Activated CD8-positive, alpha-beta T cell treated with anti-CD3 and anti-CD28 coated beads, Interleukin-2, amount 10 ng/mL, durations not matched to agents 7 days and 5 days (primary cell): ENCODE measurements at regions of chr1 and their contacts with region 1.

Region 1: GRCh38 chr1:112501810-112502641 is 6.7 kb upstream of the WNT2B start:
- DNase-seq: peak; percentile 64
- ATAC-seq: peak; percentile 78
- H3K4me3 Mint-ChIP-seq: peak overlapping the region; percentile 54
- H3K27ac Mint-ChIP-seq: no peak overlapping the region
- H3K4me1 Mint-ChIP-seq: peaks cover 8% of the 10 kb centered on the region
- H3K27me3 Mint-ChIP-seq: peaks cover 59% of the 10 kb centered on the region

Region 2: GRCh38 chr1:112522621-112523020 is 20.6 kb after region 1 on chr1:
- CTCF ChIA-PET with region 1: interaction called, 13 read pairs
- POLR2A ChIA-PET with region 1: no interaction called
- DNase-seq: no peak
- ATAC-seq: no peak
- H3K4me3 Mint-ChIP-seq: no peak overlapping the region
- H3K27ac Mint-ChIP-seq: no peak overlapping the region
- H3K4me1 Mint-ChIP-seq: no peaks in the 10 kb centered on the region
- H3K27me3 Mint-ChIP-seq: no peaks in the 10 kb centered on the region

Region 3: GRCh38 chr1:112614460-112615065 is 112.5 kb after region 1 on chr1:
- CTCF ChIA-PET with region 1: interaction called, 55 read pairs
- POLR2A ChIA-PET with region 1: interaction called, 7 read pairs
- DNase-seq: peak; percentile 31
- ATAC-seq: no peak
- H3K4me3 Mint-ChIP-seq: no peak overlapping the region
- H3K27ac Mint-ChIP-seq: no peak overlapping the region
- H3K4me1 Mint-ChIP-seq: peaks cover 23% of the 10 kb centered on the region
- H3K27me3 Mint-ChIP-seq: no peaks in the 10 kb centered on the region

Region 4: GRCh38 chr1:112619520-112620376 is 117.7 kb after region 1 on chr1 and contains the start of gene CAPZA1:
- CTCF ChIA-PET with region 1: interaction called, 55 read pairs
- POLR2A ChIA-PET with region 1: interaction called, 7 read pairs
- DNase-seq: peak; percentile 95
- ATAC-seq: peak; percentile 80
- H3K4me3 Mint-ChIP-seq: peak within 1 kb of the TSS; percentile 100
- H3K27ac Mint-ChIP-seq: peak within 1 kb of the TSS; percentile 100
- H3K4me1 Mint-ChIP-seq: peaks cover 36% of the 10 kb centered on the region
- H3K27me3 Mint-ChIP-seq: no peaks in the 10 kb centered on the region
- total RNA-seq, gene CAPZA1: 279 to 280 TPM

Region 5: DNA sequence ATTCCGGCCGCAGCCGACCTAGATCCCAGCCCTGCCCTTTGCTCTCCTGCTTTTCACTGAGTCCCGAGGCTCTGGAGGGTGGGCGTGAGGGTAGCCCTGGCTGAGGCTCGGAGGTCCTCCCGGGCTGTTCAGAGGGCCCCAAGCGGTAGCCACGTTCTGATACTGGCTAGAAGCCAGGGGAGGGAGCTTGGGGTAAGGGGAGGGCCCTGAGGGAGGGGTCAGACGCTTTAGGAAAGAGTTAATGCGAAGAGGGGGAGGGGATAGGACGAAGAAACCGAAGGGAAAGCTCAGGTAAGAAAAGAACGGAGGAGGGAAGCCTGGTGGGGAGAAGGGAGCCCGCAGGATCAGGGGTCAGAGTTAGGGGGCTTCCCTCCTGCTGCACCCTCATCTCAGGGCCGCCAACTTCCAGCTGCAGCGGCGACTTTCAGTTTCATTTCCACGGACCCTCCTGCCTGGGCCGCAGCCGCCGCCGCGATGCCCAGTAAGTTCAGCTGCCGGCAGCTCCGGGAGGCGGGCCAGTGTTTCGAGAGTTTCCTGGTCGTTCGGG is 172.5 kb after region 1 on chr1 and contains the start of gene MOV10:
- CTCF ChIA-PET with region 1: interaction called, 18 read pairs
- POLR2A ChIA-PET with region 1: interaction called, 3 read pairs
- DNase-seq: peak; percentile 75
- ATAC-seq: peak; percentile 77
- H3K4me3 Mint-ChIP-seq: peak within 1 kb of the TSS; percentile 95
- H3K27ac Mint-ChIP-seq: peak within 1 kb of the TSS; percentile 97
- H3K4me1 Mint-ChIP-seq: peaks cover 47% of the 10 kb centered on the region
- H3K27me3 Mint-ChIP-seq: no peaks in the 10 kb centered on the region
- total RNA-seq, gene MOV10: 120 TPM

Region 6: DNA sequence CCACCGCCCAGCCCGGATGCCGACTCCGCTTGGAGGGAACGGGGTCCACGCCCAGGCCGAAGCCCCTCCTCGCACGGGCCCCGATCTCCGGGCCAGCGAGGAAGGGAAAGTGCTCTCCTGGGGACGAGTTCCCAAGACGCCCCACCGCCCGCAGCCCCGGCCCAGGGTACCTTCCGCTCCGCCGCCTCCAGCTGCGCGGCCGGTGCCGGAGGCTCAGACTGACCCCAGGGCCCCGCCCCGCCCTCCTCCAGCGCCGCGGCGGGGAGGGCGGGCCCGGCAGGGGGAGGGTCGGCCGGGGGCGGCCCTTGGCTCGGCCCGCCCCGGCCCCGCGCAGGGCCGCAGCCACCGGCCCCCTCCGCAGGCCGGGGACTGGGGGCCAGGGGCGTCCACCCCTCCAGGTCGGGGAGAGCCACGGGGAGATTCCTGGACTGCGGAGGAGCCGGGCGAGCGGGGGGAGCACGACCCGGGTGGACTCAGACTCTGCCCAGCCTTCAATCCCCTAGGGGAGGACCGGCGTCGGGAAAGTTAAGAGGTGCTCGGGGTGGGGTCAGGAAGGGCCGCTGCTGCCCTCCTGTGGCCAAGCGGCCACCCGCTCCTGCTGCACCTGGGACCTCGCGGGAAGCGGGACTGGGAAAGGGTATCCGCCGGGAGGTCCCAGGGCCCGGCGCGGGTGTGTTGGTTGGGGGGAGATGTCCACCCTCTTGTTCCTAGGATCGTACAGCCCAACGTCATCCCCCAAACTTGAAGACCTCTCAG is 205.1 kb after region 1 on chr1 and contains the start of gene RHOC:
- CTCF ChIA-PET with region 1: interaction called, 27 read pairs
- POLR2A ChIA-PET with region 1: interaction called, 4 read pairs
- DNase-seq: peak; percentile 72
- ATAC-seq: peak; percentile 75
- H3K4me3 Mint-ChIP-seq: peak within 1 kb of the TSS; percentile 79
- H3K27ac Mint-ChIP-seq: peak within 1 kb of the TSS; percentile 92
- H3K4me1 Mint-ChIP-seq: peaks cover 44% of the 10 kb centered on the region
- H3K27me3 Mint-ChIP-seq: peaks cover 25% of the 10 kb centered on the region
- total RNA-seq, gene RHOC: 85.6 to 93.8 TPM

Region 7: DNA sequence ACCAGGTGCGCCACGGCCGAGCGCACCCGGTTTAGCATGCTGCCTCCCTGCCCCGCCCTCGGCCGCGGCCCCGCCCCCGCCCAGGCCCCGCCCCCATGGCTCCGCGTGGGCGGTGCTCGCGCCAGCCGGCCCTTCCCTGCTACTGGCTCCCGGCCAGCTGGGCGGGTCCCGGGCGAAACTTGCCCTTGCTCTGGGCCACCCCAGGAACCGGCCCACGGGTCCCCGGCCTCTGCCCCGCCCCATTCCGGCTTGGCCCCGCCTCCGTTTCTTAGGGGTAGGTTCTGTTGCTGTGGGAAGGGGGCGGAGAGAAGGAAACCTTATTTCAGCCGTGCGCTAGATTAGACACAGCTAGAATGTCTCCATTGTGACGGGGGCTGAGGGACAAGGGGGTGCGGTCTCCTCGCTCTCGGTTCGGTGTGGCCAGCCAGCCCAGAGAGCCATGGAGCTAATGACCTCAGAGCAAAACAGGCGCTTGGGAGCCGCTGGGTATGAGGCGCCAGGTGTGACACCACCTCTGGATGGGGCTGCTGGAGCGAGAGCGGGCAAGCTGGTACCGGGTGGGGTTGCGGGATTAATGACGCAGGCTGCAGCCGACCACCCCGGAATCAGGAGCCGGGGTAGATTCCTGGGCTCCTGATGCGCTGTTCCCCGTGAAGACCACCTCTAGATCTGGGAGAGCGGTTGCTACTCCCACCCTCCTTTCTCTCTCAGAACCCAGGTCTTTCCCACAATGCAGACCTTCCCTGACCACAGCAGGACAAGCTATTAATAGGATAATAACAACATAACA is 213.4 kb after region 1 on chr1 and contains the start of gene PPM1J:
- CTCF ChIA-PET with region 1: interaction called, 18 read pairs
- POLR2A ChIA-PET with region 1: no interaction called
- DNase-seq: peak; percentile 98
- ATAC-seq: peak; percentile 93
- H3K4me3 Mint-ChIP-seq: peak within 1 kb of the TSS; percentile 81
- H3K27ac Mint-ChIP-seq: peak within 1 kb of the TSS; percentile 64
- H3K4me1 Mint-ChIP-seq: peaks cover 28% of the 10 kb centered on the region
- H3K27me3 Mint-ChIP-seq: peaks cover 38% of the 10 kb centered on the region
- total RNA-seq, gene PPM1J: not detected